ENCODE measurements at regions of chr2 and their contacts with region 1.

Region 1: GRCh38 chr2:101883863-101884262 is 107.9 kb upstream of the IL1R2 start:
- DNase-seq: no peak
- ATAC-seq: peak; percentile 44; the same call in 1 of the 2 replicates
- H3K4me3 Mint-ChIP-seq: no peak overlapping the region
- H3K27ac Mint-ChIP-seq: no peak overlapping the region
- H3K4me1 Mint-ChIP-seq: no peaks in the 10 kb centered on the region
- H3K27me3 Mint-ChIP-seq: no peaks in the 10 kb centered on the region
- CTCF ChIP-seq: peak; percentile 40; the same call in 1 of the 2 replicates

Region 2: DNA sequence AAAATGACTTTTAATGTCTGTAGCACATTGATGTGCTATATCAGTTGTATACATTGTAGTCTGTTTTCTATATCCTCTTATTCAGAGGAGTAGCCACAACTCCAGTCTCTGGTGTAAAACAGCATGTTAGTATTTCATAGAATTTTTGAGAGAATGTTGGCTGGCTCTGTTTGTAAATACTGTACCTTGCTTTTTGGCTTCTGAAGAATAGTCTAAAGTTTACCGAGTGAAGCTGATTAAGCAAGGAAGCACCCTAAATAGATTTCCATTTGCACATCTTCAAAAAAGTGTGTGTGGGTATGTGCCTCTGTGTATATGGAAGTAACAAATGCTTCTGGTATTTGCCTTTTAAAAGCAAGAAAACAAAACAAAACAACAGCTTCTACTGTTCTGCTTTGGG is 135.9 kb before region 1 on chr2:
- CTCF ChIA-PET with region 1: no interaction called
- POLR2A ChIA-PET with region 1: no interaction called
- DNase-seq: no peak
- ATAC-seq: no peak
- H3K4me3 Mint-ChIP-seq: no peak overlapping the region
- H3K27ac Mint-ChIP-seq: no peak overlapping the region
- H3K4me1 Mint-ChIP-seq: peaks cover 72% of the 10 kb centered on the region
- H3K27me3 Mint-ChIP-seq: no peaks in the 10 kb centered on the region
- CTCF ChIP-seq: no peak

Region 3: DNA sequence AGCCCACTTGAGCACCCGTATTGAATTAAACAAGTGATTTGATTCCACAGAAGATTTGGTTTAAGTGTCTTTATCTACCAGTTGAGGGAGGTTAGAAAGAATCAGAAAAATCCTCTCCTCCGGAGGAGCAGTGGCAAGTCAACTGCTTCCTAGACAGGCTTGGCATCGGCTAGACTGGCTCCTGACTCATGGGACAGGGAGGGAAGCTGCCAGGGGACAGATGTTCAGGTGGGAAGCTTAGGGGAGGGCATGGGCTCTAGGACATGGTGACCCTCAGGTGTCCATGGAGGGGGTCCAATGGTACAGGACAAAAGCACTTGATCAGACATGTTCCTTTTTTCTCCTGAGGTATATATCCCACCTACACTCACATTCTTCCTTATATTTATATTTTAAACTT is 11.4 kb before region 1 on chr2:
- CTCF ChIA-PET with region 1: interaction called, 15 read pairs
- POLR2A ChIA-PET with region 1: no interaction called
- DNase-seq: no peak
- ATAC-seq: no peak
- H3K4me3 Mint-ChIP-seq: no peak overlapping the region
- H3K27ac Mint-ChIP-seq: peak overlapping the region; percentile 39; the same call in 1 of the 2 replicates
- H3K4me1 Mint-ChIP-seq: peaks cover 23% of the 10 kb centered on the region
- H3K27me3 Mint-ChIP-seq: no peaks in the 10 kb centered on the region
- CTCF ChIP-seq: no peak

Region 4: GRCh38 chr2:101983928-101984327 is 100.1 kb after region 1 on chr2:
- CTCF ChIA-PET with region 1: interaction called, 18 read pairs
- POLR2A ChIA-PET with region 1: no interaction called
- DNase-seq: no peak
- ATAC-seq: no peak; the same call in 1 of the 2 replicates
- H3K4me3 Mint-ChIP-seq: no peak overlapping the region
- H3K27ac Mint-ChIP-seq: no peak overlapping the region
- H3K4me1 Mint-ChIP-seq: peaks cover 22% of the 10 kb centered on the region
- H3K27me3 Mint-ChIP-seq: no peaks in the 10 kb centered on the region
- CTCF ChIP-seq: no peak

Region 5: GRCh38 chr2:102141970-102142828 is 258.3 kb after region 1 on chr2 and contains the start of gene IL1R1:
- CTCF ChIA-PET with region 1: no interaction called
- POLR2A ChIA-PET with region 1: no interaction called
- DNase-seq: peak; percentile 62
- ATAC-seq: peak; percentile 86
- H3K4me3 Mint-ChIP-seq: peak within 1 kb of the TSS; percentile 74
- H3K27ac Mint-ChIP-seq: no peak within 1 kb of the TSS
- H3K4me1 Mint-ChIP-seq: peaks cover 17% of the 10 kb centered on the region
- H3K27me3 Mint-ChIP-seq: peaks cover 41% of the 10 kb centered on the region
- CTCF ChIP-seq: no peak
- total RNA-seq, gene IL1R1: 0.37 to 0.78 TPM (median 0.55 TPM) in 3 replicates

Region 6: DNA sequence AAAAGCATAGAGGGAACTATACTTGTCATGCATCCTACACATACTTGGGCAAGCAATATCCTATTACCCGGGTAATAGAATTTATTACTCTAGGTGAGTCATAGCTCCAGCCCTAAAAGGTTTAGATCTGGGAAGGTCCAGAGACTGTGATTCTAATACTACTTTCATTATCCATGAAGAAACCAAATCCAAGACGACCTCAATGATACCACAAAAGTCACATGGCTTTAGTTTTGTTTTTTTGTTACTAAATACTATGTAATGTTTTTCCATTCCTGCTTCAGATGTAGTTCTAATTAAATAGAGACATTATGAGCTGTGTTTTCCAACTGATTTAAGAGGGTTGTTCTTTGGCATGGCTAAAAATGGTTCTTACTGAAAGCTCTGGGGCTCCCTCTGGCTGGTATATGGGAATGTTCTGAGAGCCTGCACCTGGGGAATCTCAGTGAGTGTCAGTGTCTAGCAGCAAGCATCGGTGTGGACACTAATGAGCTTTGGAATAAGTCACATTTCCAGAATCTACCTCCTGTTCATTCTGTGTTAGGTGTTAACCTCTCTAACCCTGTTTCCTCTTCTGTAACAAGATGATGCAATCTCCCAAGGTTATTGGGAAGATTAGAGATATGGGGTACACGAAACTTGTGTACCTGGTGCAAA is 282.5 kb after region 1 on chr2:
- CTCF ChIA-PET with region 1: interaction called, 15 read pairs
- POLR2A ChIA-PET with region 1: no interaction called
- DNase-seq: no peak
- ATAC-seq: peak; percentile 85
- H3K4me3 Mint-ChIP-seq: no peak overlapping the region
- H3K27ac Mint-ChIP-seq: no peak overlapping the region
- H3K4me1 Mint-ChIP-seq: peaks cover 1% of the 10 kb centered on the region
- H3K27me3 Mint-ChIP-seq: no peaks in the 10 kb centered on the region
- CTCF ChIP-seq: no peak

Measured in WTC11 (cell line).